ENCODE measurements at regions of chr5 and their contacts with region 1.

Region 1: DNA sequence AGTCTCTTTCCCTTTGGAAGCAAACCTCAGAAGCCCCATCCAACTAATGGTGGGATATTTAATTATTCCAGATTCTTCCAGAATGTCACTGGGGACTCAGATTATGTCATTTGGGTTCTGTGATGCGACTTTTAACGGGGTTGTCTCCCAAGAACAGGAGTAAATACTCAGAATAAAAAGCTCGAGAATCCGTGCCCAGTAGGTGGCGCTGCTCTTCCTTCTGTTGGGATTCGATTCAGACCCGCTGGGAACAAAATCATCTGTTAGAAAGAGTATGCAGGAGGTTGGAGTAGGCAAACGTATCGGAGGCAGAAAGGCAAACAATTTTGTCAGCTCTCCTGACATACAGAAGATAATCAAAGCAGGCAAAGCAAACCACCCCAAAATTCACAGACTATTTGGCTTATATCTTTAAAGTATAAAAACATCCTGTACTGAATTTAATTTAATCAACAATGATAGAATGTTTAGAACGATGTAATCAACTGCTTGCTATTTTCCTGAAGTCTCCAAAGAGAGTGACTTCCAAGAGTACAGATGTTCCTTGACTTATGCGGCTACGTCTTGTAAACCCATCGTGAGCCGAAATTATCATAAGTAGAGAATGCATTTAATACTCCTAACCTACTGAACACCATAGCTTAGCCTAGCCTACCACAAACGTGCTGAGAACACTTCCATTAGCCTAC is 169.8 kb upstream of the RAI14 start:
- DNase-seq: peak; percentile 83
- ATAC-seq: peak; percentile 49
- H3K4me3 ChIP-seq: peak overlapping the region; percentile 21 to 58 (median 33); a peak in 4 of 6 replicates
- H3K27ac ChIP-seq: peak overlapping the region; percentile 85
- H3K4me1 ChIP-seq: peaks cover 77% of the 10 kb centered on the region
- H3K27me3 ChIP-seq: 0 out of 5 replicates have a peak, but pooled peaks cover 0 to 7% of the 10 kb centered on the region in 2 experiments
- CTCF ChIP-seq: peak; percentile 88
- EP300 ChIP-seq: 0 out of 4 replicates have a peak, but pooled peaks of 1 of the 2 experiments have one; percentile 4
- POLR2A ChIP-seq: no peak
- RAD21 ChIP-seq: peak; percentile 77

Region 2: GRCh38 chr5:34522599-34523386 is 36.5 kb after region 1 on chr5:
- CTCF ChIA-PET with region 1: interaction called, 9 read pairs
- POLR2A ChIA-PET with region 1: no interaction called
- in situ Hi-C with region 1: no loop called
- intact Hi-C with region 1: loop called (anchors 1 kb)
- DNase-seq: peak; percentile 65
- ATAC-seq: peak; percentile 85
- H3K4me3 ChIP-seq: no peak overlapping the region
- H3K27ac ChIP-seq: no peak overlapping the region
- H3K4me1 ChIP-seq: peaks cover 21% of the 10 kb centered on the region
- H3K27me3 ChIP-seq: no peaks in the 10 kb centered on the region
- CTCF ChIP-seq: peak; percentile 87
- EP300 ChIP-seq: no peak
- POLR2A ChIP-seq: no peak
- RAD21 ChIP-seq: peak; percentile 65; the same call in 1 of the 2 replicates

Region 3: DNA sequence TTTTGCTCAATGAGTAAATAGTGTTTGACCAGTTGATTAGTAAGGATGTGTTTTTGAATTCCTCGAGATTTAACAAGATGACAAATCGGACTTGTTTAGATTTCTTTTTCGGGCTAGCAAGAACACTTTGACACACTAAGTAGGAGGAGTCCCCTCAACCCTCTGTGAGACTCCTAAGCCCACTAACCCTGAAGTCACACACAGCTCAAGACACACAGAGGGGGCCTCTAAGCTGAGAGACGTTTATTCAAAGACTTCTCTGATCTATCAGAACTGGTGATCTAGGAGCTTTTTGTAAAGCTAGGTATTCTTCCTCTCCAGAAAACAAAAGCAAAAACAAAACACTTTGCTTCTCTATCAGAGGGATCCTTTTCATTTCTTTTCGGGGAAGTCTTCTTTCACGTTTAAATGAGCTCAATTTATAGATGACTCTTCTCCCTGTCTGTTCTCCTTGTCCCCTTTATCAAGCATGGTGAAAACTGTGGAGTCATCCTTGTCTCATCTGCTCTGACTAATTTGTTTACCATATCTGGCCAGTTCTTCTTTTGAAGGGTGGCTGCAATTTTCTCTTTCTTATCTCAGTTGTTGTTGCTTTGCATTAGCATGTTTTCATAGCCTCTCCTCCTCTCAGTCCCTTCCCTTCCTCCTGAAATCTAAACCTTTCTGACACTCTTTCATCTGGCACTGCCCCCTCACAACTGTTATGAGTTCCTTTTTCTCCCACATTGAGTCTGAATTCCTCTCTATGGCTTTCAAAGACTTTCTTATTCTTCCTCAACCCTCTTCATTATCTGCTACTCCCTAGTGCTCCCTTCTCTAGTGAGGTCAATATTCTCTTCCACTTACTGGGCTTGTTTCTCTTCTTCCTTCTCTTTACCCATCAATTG is 101.3 kb after region 1 on chr5:
- CTCF ChIA-PET with region 1: no interaction called
- POLR2A ChIA-PET with region 1: interaction called, 6 read pairs
- in situ Hi-C with region 1: no loop called
- intact Hi-C with region 1: loop called (anchors 5 kb)
- DNase-seq: peak; percentile 57
- ATAC-seq: no peak; the same call in 2 of the 3 replicates
- H3K4me3 ChIP-seq: no peak overlapping the region
- H3K27ac ChIP-seq: peak overlapping the region; percentile 34
- H3K4me1 ChIP-seq: peaks cover 61% of the 10 kb centered on the region
- H3K27me3 ChIP-seq: no peaks in the 10 kb centered on the region
- CTCF ChIP-seq: no peak
- EP300 ChIP-seq: peak in 1 of 2 experiments; percentile 50; a peak in 1 of 4 replicates
- POLR2A ChIP-seq: no peak
- RAD21 ChIP-seq: no peak

Region 4: DNA sequence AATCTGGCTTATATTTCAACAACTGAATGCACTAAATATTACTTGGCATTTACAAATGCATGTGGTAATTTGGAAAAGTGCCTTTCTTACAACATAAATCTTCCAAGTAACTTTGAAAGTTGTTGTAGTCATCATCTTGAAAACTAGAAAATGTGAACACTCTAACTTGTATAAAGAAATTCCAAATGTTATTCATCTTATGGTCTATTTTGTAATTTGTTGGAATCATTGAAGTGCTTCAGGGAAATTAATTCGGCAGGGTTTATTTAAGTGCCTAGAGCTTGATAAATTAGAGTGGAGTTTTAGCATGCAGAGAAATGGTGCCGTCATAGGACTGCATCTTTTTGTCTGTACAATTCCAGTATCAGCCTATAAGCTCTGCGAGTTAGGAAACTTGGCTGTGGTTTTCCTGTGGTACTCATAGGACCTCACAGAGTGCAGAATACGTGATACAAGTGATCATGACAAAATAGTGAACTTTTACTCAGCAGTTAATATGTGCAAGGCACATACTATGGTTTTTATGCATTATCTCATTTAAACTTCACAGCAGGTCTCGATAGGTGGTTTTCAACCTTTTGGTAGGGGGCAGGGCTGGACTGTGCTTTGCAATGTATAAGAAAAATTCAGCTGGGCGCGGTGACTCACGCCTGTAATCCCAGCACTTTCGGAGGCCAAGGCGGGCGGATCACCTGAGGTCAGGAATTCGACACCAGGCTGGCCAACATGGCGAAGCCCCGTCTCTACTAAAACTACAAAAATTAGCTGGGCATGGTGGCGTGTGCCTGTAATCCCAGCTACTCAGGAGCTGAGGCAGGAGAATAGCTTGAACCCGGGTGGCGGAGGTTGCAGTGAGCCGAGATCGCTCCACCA is 249.4 kb after region 1 on chr5:
- CTCF ChIA-PET with region 1: no interaction called
- POLR2A ChIA-PET with region 1: no interaction called
- in situ Hi-C with region 1: no loop called
- intact Hi-C with region 1: loop called (anchors 5 kb)
- DNase-seq: no peak
- ATAC-seq: no peak
- H3K4me3 ChIP-seq: no peak overlapping the region
- H3K27ac ChIP-seq: no peak overlapping the region
- H3K4me1 ChIP-seq: peaks cover 23% of the 10 kb centered on the region
- H3K27me3 ChIP-seq: no peaks in the 10 kb centered on the region
- CTCF ChIP-seq: no peak
- EP300 ChIP-seq: no peak
- POLR2A ChIP-seq: no peak
- RAD21 ChIP-seq: no peak

Region 5: GRCh38 chr5:34898258-34898895 is 412.1 kb after region 1 on chr5:
- CTCF ChIA-PET with region 1: interaction called, 16 read pairs
- POLR2A ChIA-PET with region 1: no interaction called
- in situ Hi-C with region 1: loop called (anchors 5 kb)
- intact Hi-C with region 1: loop called (anchors 1 kb)
- DNase-seq: peak; percentile 56
- ATAC-seq: peak; percentile 95
- H3K4me3 ChIP-seq: no peak overlapping the region
- H3K27ac ChIP-seq: no peak overlapping the region
- H3K4me1 ChIP-seq: peaks cover 6% of the 10 kb centered on the region
- H3K27me3 ChIP-seq: no peaks in the 10 kb centered on the region
- CTCF ChIP-seq: peak; percentile 88
- EP300 ChIP-seq: no peak
- POLR2A ChIP-seq: no peak
- RAD21 ChIP-seq: peak; percentile 88

Region 6: DNA sequence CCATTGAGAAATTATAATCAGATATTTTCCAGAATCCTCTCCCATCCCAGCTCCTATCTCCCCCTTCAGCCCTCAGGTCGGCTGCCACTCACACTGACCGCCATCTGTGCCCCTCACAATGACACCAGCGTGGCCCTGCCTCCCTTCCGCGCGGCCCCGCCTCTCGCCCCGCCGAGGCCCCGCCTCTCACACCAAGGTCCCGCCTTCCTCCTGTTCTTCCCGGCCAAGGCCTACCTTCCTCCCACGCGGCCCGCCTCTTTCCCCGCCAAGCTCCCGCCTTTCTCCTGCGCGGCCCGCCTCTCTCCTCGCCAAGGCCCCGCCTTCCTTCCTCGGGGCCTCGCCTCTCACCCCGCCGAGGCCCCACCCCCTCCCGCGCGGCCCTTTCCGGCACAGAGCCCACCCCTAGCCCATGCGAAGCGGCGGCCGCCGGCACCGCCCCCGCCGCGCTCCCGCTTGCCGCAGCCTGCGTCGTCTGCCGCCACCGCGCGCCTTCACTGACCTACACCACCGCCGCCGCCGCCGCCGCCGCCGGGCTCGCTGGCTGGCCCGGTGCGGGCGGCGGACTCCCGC is 442.9 kb after region 1 on chr5 and contains the start of gene DNAJC21:
- CTCF ChIA-PET with region 1: no interaction called
- POLR2A ChIA-PET with region 1: interaction called, 13 read pairs
- in situ Hi-C with region 1: no loop called
- intact Hi-C with region 1: no loop called
- DNase-seq: peak; percentile 92
- ATAC-seq: peak; percentile 93
- H3K4me3 ChIP-seq: peak within 1 kb of the TSS; percentile 91 to 99 (median 96)
- H3K27ac ChIP-seq: peak within 1 kb of the TSS; percentile 92
- H3K4me1 ChIP-seq: peaks cover 19% of the 10 kb centered on the region
- H3K27me3 ChIP-seq: no peaks in the 10 kb centered on the region; a peak in 1 of 5 replicates
- CTCF ChIP-seq: no peak
- EP300 ChIP-seq: no peak
- POLR2A ChIP-seq: peak; percentile 49 to 59; a peak in 3 of 4 replicates
- RAD21 ChIP-seq: 0 out of 2 replicates have a peak, but pooled peaks have one; percentile 4
- total RNA-seq, gene DNAJC21: 41.6 and 46.4 TPM in 2 replicates

Measured in HepG2 (cell line).